MCF 10A (cell line): ENCODE measurements at regions of chr7 and their contacts with region 1.

Region 1: GRCh38 chr7:5494683-5495561 is 71.3 kb upstream of the TNRC18 start:
- DNase-seq: peak; percentile 82
- H3K4me3 Mint-ChIP-seq: peak overlapping the region; percentile 39
- H3K27ac Mint-ChIP-seq: no peak overlapping the region
- H3K4me1 Mint-ChIP-seq: peaks cover 13% of the 10 kb centered on the region
- H3K27me3 Mint-ChIP-seq: no peaks in the 10 kb centered on the region
- CTCF ChIP-seq: peak; percentile 97

Region 2: GRCh38 chr7:5507013-5507412 is 12.1 kb after region 1 on chr7:
- CTCF ChIA-PET with region 1: interaction called, 12 read pairs
- POLR2A ChIA-PET with region 1: interaction called, 14 read pairs
- intact Hi-C with region 1: no loop called
- DNase-seq: no peak
- H3K4me3 Mint-ChIP-seq: no peak overlapping the region
- H3K27ac Mint-ChIP-seq: no peak overlapping the region
- H3K4me1 Mint-ChIP-seq: peaks cover 9% of the 10 kb centered on the region
- H3K27me3 Mint-ChIP-seq: no peaks in the 10 kb centered on the region
- CTCF ChIP-seq: no peak

Region 3: GRCh38 chr7:5533821-5534386 is 39.0 kb after region 1 on chr7:
- CTCF ChIA-PET with region 1: interaction called, 11 read pairs
- POLR2A ChIA-PET with region 1: no interaction called
- intact Hi-C with region 1: no loop called
- DNase-seq: no peak
- H3K4me3 Mint-ChIP-seq: no peak overlapping the region
- H3K27ac Mint-ChIP-seq: no peak overlapping the region
- H3K4me1 Mint-ChIP-seq: peaks cover 14% of the 10 kb centered on the region
- H3K27me3 Mint-ChIP-seq: no peaks in the 10 kb centered on the region
- CTCF ChIP-seq: no peak

Region 4: DNA sequence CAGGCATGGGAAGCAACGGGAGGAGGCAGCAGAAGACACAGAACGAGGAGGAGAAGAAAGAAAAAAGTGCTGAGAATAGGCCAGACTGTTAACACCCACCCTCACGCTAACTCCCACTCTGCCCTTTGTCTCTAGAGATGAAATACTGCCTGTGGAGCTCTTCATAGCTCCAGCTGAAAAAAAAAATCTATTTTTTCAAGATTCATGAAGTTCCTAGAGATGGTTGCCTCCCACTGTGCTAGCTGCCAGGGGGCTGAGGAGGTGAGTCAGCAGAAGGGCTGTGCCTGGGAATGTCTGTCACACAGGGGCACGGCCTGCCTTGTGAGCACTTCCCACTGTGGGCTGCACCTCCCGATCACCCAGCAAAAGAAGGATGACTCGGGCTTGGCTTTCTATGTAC is 142.0 kb after region 1 on chr7:
- CTCF ChIA-PET with region 1: interaction called, 11 read pairs
- POLR2A ChIA-PET with region 1: no interaction called
- intact Hi-C with region 1: no loop called
- DNase-seq: peak; percentile 64
- H3K4me3 Mint-ChIP-seq: no peak overlapping the region
- H3K27ac Mint-ChIP-seq: peak overlapping the region; percentile 52
- H3K4me1 Mint-ChIP-seq: peaks cover 21% of the 10 kb centered on the region
- H3K27me3 Mint-ChIP-seq: no peaks in the 10 kb centered on the region
- CTCF ChIP-seq: no peak

Region 5: GRCh38 chr7:5677538-5678294 is 182.8 kb after region 1 on chr7:
- CTCF ChIA-PET with region 1: interaction called, 23 read pairs
- POLR2A ChIA-PET with region 1: interaction called, 6 read pairs
- intact Hi-C with region 1: no loop called
- DNase-seq: peak; percentile 76
- H3K4me3 Mint-ChIP-seq: no peak overlapping the region
- H3K27ac Mint-ChIP-seq: peak overlapping the region; percentile 39
- H3K4me1 Mint-ChIP-seq: peaks cover 12% of the 10 kb centered on the region
- H3K27me3 Mint-ChIP-seq: no peaks in the 10 kb centered on the region
- CTCF ChIP-seq: peak; percentile 75

Region 6: GRCh38 chr7:5704534-5704922 is 209.6 kb after region 1 on chr7:
- CTCF ChIA-PET with region 1: interaction called, 21 read pairs
- POLR2A ChIA-PET with region 1: no interaction called
- intact Hi-C with region 1: loop called (anchors 1 kb)
- DNase-seq: peak; percentile 86
- H3K4me3 Mint-ChIP-seq: no peak overlapping the region
- H3K27ac Mint-ChIP-seq: no peak overlapping the region
- H3K4me1 Mint-ChIP-seq: peaks cover 31% of the 10 kb centered on the region
- H3K27me3 Mint-ChIP-seq: no peaks in the 10 kb centered on the region
- CTCF ChIP-seq: peak; percentile 69

Region 7: GRCh38 chr7:5892498-5892897 is 397.6 kb after region 1 on chr7:
- CTCF ChIA-PET with region 1: no interaction called
- POLR2A ChIA-PET with region 1: no interaction called
- intact Hi-C with region 1: no loop called
- DNase-seq: no peak
- H3K4me3 Mint-ChIP-seq: no peak overlapping the region
- H3K27ac Mint-ChIP-seq: no peak overlapping the region
- H3K4me1 Mint-ChIP-seq: peaks cover 6% of the 10 kb centered on the region
- H3K27me3 Mint-ChIP-seq: no peaks in the 10 kb centered on the region
- CTCF ChIP-seq: no peak

Region 8: DNA sequence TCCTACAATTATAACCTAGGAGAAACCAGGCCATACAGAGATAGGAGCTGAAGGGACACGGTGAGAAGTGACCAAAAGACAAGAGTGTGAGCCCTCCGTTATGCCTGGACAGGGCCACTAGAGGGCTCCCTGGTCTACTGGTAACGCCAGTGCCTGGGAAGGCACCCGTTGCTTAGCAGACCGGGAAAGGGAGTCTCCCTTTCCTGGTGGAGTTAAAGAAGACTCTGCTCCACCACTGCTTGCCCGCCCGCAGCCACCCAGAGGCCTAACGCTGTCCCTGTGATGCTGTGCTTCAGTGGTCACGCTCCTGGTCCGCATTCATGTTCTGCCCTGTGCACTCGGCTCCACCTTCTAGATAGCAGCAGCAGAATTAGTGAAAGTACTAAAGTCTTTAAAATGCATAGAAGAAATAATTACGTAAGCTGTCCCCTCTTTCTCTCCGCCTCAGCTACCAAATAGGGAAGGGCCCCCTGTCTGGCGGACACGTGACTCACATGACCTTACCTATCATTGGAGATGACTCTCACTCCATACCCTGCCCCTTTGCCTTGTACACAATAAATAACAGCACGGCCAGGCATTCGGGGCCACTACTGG is 1021.6 kb after region 1 on chr7:
- CTCF ChIA-PET with region 1: no interaction called
- POLR2A ChIA-PET with region 1: no interaction called
- intact Hi-C with region 1: no loop called
- DNase-seq: peak; percentile 86
- H3K4me3 Mint-ChIP-seq: peak overlapping the region; percentile 51
- H3K27ac Mint-ChIP-seq: no peak overlapping the region
- H3K4me1 Mint-ChIP-seq: peaks cover 7% of the 10 kb centered on the region
- H3K27me3 Mint-ChIP-seq: no peaks in the 10 kb centered on the region
- CTCF ChIP-seq: peak; percentile 88